Right ventricle myocardium inferior (tissue), 1 donor: ENCODE measurements at regions of chr14 and their contacts with region 1.

Region 1: GRCh38 chr14:52824507-52824906 is 33.1 kb upstream of the GNPNAT1 start:
- DNase-seq: no peak
- ATAC-seq: no peak

Region 2: DNA sequence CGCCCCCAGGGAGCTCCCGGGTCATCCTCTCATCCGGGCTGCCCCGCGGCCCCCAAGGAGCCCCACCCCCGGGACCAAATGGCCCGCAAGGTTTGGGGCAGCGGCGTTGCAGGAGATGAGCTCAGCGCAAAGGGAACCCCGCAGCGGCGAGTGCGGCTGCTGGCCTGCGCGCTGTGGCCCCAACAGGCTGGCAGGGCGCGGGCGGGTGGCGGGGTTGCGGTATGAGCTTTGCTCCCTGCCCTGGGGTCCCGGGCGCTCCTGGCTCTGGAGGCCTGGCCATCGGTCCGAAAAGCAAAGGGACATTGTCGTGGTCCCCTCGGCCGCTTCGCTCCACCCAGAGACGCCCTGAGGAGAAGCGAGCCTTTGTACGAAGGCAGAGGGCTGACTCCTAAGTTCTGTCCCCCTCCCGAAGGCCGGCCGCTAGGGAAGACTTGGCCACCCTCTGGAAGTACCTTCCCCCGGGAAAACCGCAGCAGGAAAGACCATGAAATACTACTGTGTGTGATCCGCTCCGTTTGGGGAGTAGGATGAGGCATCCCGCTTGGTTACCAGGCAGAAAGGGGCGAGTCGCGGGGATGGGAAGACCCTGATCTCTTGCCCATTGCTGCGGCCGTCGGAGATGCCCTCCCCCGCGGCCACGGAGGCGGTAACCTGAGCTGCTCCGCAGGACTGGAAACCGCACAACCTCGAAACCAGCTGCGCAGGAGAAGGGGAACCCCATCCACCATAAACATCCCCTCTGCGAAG is 755.0 kb before region 1 on chr14:
- intact Hi-C with region 1: no loop called
- DNase-seq: no peak
- ATAC-seq: peak; percentile 47

Region 3: GRCh38 chr14:52961060-52961639 is 136.6 kb after region 1 on chr14:
- intact Hi-C with region 1: loop called (anchors 1 kb)
- DNase-seq: no peak
- ATAC-seq: peak; percentile 83

Region 4: GRCh38 chr14:53044486-53044885 is 220.0 kb after region 1 on chr14:
- intact Hi-C with region 1: no loop called
- DNase-seq: no peak
- ATAC-seq: no peak

Region 5: GRCh38 chr14:53055003-53055402 is 230.5 kb after region 1 on chr14:
- intact Hi-C with region 1: loop called (anchors 2 kb)
- DNase-seq: no peak
- ATAC-seq: peak; percentile 54

Region 6: GRCh38 chr14:53306267-53306721 is 481.8 kb after region 1 on chr14:
- intact Hi-C with region 1: loop called (anchors 10 kb)
- DNase-seq: peak; percentile 71
- ATAC-seq: peak; percentile 79